IMR-90 (cell line): ENCODE measurements at regions of chr20 and their contacts with region 1.

Region 1: DNA sequence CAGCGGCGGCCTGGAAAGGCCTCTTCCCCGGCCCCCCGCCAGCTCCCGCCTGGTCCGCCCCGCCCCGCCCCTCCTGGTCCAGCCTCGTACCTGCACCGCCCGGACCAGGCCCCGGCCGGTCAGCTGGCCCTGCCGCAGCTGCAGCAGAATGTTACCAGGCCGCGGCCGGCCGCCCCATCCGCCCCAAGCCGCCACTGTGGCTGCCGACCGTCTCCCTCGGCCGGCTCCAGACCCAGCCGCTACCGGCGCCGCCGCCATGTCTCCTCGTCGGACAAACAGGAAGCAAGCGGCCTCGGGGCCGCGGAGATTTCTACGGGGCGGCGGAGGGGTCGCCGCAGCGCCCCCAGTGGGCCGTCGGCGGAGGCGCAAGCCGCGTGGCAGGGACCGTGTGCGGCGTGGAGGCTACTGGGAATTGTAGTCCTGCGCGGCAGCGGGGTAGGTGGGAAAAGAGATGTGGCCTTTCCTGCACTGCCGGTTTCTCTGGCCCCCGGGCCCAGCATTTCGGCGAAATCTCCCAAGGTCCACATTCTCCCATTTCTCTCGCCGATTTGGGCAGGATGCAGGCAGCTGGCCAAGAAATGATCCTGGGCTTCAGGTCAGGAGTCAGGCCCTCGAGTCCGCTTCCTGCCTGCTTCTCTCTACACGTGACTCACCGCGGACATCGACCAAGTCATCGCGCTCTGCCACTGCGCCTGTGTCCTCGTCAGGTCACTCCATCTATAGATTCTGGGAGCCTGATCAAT is at the start of gene TRPC4AP:
- DNase-seq: peak; percentile 86
- ATAC-seq: peak; percentile 95
- H3K4me3 ChIP-seq: peak within 1 kb of the TSS; percentile 87
- H3K27ac ChIP-seq: peak within 1 kb of the TSS; percentile 96
- H3K4me1 ChIP-seq: peaks cover 9% of the 10 kb centered on the region
- H3K27me3 ChIP-seq: no peaks in the 10 kb centered on the region
- CTCF ChIP-seq: peak; percentile 98
- POLR2A ChIP-seq: peak; percentile 90
- RAD21 ChIP-seq: peak; percentile 52
- total RNA-seq, gene TRPC4AP: 39.4 and 41.0 TPM in 2 replicates

Region 2: DNA sequence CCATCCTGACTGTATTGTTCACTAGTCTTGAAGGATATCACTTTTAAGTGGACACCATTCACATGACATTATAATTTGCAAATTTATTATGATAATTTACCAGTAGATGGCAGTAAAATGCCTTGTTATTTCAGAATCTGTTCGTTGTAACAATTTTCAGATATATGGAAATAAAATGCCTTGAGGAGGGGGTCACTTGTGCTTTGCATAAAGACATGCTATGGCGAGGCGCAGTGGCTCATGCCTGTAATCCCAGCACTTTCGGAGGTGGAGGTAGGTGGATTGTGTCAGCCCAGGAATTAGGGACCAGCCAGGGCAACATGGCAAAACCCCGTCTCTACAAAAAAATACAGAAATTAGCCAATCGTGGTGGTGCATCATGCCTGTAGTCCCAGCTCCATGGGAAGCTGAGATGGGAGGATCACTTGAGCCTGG is 258.2 kb before region 1 on chr20:
- CTCF ChIA-PET with region 1: interaction called, 6 read pairs
- POLR2A ChIA-PET with region 1: interaction called, 3 read pairs
- dilution Hi-C with region 1: no loop called
- in situ Hi-C with region 1: no loop called
- intact Hi-C with region 1: loop called (anchors 10 kb)
- DNase-seq: peak; percentile 45
- ATAC-seq: peak; percentile 80
- H3K4me3 ChIP-seq: no peak overlapping the region
- H3K27ac ChIP-seq: no peak overlapping the region
- H3K4me1 ChIP-seq: no peaks in the 10 kb centered on the region; the same call in 1 of the 2 replicates
- H3K27me3 ChIP-seq: peaks cover 15% of the 10 kb centered on the region
- CTCF ChIP-seq: peak; percentile 45
- POLR2A ChIP-seq: no peak
- RAD21 ChIP-seq: peak; percentile 60

Region 3: GRCh38 chr20:35146920-35147574 is 54.4 kb after region 1 on chr20 and contains the start of gene EDEM2:
- CTCF ChIA-PET with region 1: interaction called, 9 read pairs
- POLR2A ChIA-PET with region 1: no interaction called
- dilution Hi-C with region 1: no loop called
- in situ Hi-C with region 1: no loop called
- intact Hi-C with region 1: loop called (anchors 1 kb)
- DNase-seq: peak; percentile 96
- ATAC-seq: peak; percentile 92
- H3K4me3 ChIP-seq: peak within 1 kb of the TSS; percentile 82
- H3K27ac ChIP-seq: peak within 1 kb of the TSS; percentile 66
- H3K4me1 ChIP-seq: peaks cover 5% of the 10 kb centered on the region; the same call in 1 of the 2 replicates
- H3K27me3 ChIP-seq: no peaks in the 10 kb centered on the region
- CTCF ChIP-seq: no peak
- POLR2A ChIP-seq: no peak
- RAD21 ChIP-seq: peak; percentile 10; the same call in 1 of the 2 replicates
- total RNA-seq, gene EDEM2: 22.5 and 27.4 TPM in 2 replicates

Region 4: GRCh38 chr20:35207950-35208611 is 115.4 kb after region 1 on chr20:
- CTCF ChIA-PET with region 1: interaction called, 3 read pairs
- POLR2A ChIA-PET with region 1: no interaction called
- dilution Hi-C with region 1: no loop called
- in situ Hi-C with region 1: no loop called
- intact Hi-C with region 1: loop called (anchors 1 kb)
- DNase-seq: peak; percentile 78
- ATAC-seq: peak; percentile 98
- H3K4me3 ChIP-seq: no peak overlapping the region
- H3K27ac ChIP-seq: peak overlapping the region; percentile 39
- H3K4me1 ChIP-seq: peaks cover 3% of the 10 kb centered on the region; the same call in 1 of the 2 replicates
- H3K27me3 ChIP-seq: no peaks in the 10 kb centered on the region
- CTCF ChIP-seq: peak; percentile 94
- POLR2A ChIP-seq: 0 out of 2 replicates have a peak, but pooled peaks have one; percentile 32
- RAD21 ChIP-seq: peak; percentile 97

Region 5: DNA sequence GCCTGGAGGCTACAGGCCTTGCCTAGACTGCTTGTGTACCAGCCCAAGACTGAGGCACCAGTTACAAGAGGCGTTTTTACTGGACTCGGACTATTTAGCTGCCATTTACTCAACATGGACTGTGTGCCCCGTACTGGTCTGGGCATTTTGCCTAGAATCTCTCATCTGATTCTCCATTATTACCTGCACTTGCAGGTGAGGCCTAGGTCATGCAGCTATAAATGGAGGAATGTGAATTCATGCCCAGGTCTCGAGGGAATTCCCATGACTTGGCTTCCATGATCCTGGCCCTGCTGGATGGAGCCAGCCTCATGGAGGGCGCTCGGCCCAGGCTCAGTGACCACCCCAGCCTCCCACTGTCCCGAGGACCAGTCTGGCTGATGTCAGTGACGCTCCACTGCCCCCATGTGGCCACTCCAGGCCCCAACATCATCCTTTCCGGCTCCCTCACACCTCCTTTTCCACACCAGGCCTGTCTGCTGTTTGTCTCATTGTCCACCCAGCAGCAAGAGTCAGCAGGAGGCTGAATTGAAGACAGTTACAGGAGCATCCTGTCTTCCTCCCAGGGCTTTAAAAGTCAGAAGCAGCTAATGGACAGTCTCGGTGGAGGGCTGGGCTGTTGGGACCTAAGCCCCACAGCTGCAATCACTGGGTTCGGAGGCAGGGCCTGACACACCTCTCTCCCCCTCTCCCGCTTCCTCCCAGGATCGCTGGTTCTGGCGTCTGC is 176.5 kb after region 1 on chr20:
- CTCF ChIA-PET with region 1: interaction called, 4 read pairs
- POLR2A ChIA-PET with region 1: no interaction called
- dilution Hi-C with region 1: no loop called
- in situ Hi-C with region 1: no loop called
- intact Hi-C with region 1: loop called (anchors 2 kb)
- DNase-seq: peak; percentile 62
- ATAC-seq: peak; percentile 84
- H3K4me3 ChIP-seq: no peak overlapping the region
- H3K27ac ChIP-seq: no peak overlapping the region
- H3K4me1 ChIP-seq: no peaks in the 10 kb centered on the region
- H3K27me3 ChIP-seq: no peaks in the 10 kb centered on the region
- CTCF ChIP-seq: peak; percentile 79
- POLR2A ChIP-seq: no peak
- RAD21 ChIP-seq: peak; percentile 89